CD14-positive monocyte (primary cell): ENCODE measurements at regions of chr1 and their contacts with region 1.

Region 1: GRCh38 chr1:246012341-246012740 is 494.7 kb downstream of the SMYD3 start:
- DNase-seq: peak; percentile 12 to 30 (median 25)
- H3K4me3 ChIP-seq: no peak overlapping the region
- H3K4me3 Mint-ChIP-seq: no peak overlapping the region
- H3K27ac ChIP-seq: no peak overlapping the region
- H3K27ac Mint-ChIP-seq: no peak overlapping the region
- H3K4me1 ChIP-seq: peaks cover 0 to 3% of the 10 kb centered on the region in 2 donors
- H3K4me1 Mint-ChIP-seq: peaks cover 5% of the 10 kb centered on the region
- H3K27me3 ChIP-seq: no peaks in the 10 kb centered on the region
- H3K27me3 Mint-ChIP-seq: peaks cover 0 to 3% (median 0%) of the 10 kb centered on the region in 3 donors
- CTCF ChIP-seq: peak; percentile 78

Region 2: GRCh38 chr1:246280551-246280950 is 268.2 kb after region 1 on chr1:
- intact Hi-C with region 1: loop called (anchors 5 to 10 kb)
- DNase-seq: peak; percentile 5 to 23 (median 11)
- H3K4me3 ChIP-seq: no peak overlapping the region
- H3K4me3 Mint-ChIP-seq: no peak overlapping the region
- H3K27ac ChIP-seq: no peak overlapping the region
- H3K27ac Mint-ChIP-seq: no peak overlapping the region
- H3K4me1 ChIP-seq: no peaks in the 10 kb centered on the region
- H3K4me1 Mint-ChIP-seq: peaks cover 15% of the 10 kb centered on the region
- H3K27me3 ChIP-seq: no peaks in the 10 kb centered on the region
- H3K27me3 Mint-ChIP-seq: peaks cover 0 to 2% (median 0%) of the 10 kb centered on the region in 3 donors
- CTCF ChIP-seq: peak; percentile 55